ENCODE measurements at regions of chr5 and their contacts with region 1.

Region 1: GRCh38 chr5:73902327-73903051 is 276.5 kb downstream of the ARHGEF28 start:
- DNase-seq: peak; percentile 52

Region 2: DNA sequence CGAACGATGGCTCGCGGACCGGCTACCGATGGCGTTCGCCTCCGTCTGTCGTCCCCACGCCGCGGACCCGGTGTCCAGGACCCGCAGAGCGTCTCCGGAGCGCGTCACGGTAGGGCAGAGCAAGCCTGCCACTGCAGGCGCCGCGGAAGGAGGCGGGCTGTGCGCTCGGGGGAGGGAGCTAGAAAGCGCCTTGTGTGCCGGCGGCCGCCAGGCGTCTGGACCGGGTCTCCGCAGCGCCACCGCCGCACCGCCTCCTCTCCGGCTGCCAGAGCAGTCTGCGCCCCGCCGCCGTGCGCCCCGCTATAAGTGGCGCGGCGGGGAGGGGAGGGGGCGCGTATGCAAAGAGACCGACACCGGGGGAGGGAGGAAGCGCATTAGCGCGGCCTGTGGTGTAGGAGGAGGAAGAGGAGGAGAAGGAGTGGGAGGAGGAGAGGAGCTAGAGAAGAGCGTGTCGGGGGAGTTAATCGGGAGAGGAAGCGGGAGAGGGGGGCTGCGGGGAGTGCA is 738.0 kb after region 1 on chr5 and contains the start of gene ENC1:
- in situ Hi-C with region 1: loop called (anchors 10 kb)
- DNase-seq: peak; percentile 94

Region 3: GRCh38 chr5:74934949-74935751 is 1032.7 kb after region 1 on chr5:
- in situ Hi-C with region 1: loop called (anchors 25 kb)
- DNase-seq: peak; percentile 43

Measured in KBM-7 (cell line).